ENCODE measurements at regions of chr6 and their contacts with region 1.

Region 1: DNA sequence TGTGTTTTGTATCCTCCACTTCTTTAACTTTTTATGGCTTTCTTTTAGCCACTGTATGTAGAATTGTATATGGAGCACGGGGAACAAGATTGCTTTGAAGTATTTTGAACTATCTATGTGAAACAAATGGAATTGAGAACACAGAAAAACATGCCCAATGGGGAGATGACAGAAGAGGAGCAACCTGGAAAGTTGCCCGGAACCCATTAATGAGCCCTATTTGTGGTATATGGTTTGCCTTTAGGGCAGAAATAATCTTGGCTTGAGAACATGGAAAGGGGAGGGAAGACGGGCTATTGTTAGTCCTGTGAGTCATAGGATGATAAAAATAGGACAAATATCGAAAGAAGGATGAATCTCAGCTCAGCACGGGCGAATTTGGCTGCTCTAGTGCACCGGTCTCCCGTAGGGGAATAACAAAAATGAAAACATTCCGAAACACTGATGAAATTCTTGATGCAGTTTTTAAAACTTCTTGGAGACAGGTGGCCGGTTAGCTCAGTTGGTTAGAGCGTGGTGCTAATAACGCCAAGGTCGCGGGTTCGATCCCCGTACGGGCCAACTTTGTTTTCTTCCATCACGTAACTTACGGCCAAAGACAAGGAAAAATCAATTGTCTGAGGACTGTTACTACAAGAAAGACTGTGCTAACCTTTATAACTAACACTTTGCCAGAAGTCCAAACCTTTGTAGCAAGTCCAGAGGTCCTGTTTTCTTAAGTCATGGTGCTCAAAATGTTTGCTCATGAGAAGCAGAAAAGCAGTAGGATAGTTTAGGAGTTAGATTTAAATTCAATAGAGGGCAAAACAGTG is 15.7 kb downstream of the HMGN4 start:
- DNase-seq: peak; percentile 91
- H3K4me3 Mint-ChIP-seq: no peak overlapping the region
- H3K27ac Mint-ChIP-seq: no peak overlapping the region
- H3K4me1 Mint-ChIP-seq: peaks cover 26% of the 10 kb centered on the region
- H3K27me3 Mint-ChIP-seq: no peaks in the 10 kb centered on the region

Region 2: DNA sequence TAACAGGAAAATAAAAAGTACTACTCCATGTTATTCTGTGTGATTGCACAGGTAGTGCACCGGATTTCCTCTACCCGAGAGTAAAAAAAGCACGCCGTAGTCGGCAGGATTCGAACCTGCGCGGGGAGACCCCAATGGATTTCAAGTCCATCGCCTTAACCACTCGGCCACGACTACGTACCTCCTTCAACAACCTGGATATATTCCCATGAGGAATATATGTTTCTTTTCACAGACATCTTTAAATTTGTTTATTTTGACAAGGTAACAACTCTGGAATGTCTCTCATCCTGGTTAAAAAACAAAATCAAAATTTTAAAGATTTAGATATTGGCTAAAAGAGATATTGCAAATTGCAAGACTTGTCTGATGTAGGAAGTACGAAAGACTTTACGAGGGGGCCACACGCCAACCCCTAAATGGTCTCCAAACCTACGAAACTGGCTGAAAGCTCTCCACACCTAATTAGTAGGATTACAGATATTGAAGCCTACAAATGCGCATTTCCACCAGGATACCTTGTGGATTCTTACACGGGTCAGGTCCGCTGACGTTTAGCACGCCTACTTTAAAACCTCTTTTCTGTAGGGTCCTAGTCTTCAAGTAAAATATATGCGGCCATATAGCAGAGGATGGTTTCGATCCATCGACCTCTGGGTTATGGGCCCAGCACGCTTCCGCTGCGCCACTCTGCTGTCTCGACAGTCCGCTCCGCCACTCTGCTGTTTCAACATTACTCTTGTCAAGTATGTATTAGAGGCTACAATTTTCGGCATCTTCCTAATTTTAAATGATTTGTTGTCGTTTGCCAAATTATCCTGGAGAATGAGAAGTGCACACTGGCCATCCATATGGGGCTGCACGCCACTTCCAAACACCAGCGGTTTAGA is 241.1 kb before region 1 on chr6:
- CTCF ChIA-PET with region 1: interaction called, 3 read pairs
- intact Hi-C with region 1: loop called (anchors 1 kb)
- DNase-seq: peak; percentile 95
- H3K4me3 Mint-ChIP-seq: peak overlapping the region; percentile 81
- H3K27ac Mint-ChIP-seq: peak overlapping the region; percentile 83
- H3K4me1 Mint-ChIP-seq: peaks cover 28% of the 10 kb centered on the region
- H3K27me3 Mint-ChIP-seq: no peaks in the 10 kb centered on the region

Region 3: DNA sequence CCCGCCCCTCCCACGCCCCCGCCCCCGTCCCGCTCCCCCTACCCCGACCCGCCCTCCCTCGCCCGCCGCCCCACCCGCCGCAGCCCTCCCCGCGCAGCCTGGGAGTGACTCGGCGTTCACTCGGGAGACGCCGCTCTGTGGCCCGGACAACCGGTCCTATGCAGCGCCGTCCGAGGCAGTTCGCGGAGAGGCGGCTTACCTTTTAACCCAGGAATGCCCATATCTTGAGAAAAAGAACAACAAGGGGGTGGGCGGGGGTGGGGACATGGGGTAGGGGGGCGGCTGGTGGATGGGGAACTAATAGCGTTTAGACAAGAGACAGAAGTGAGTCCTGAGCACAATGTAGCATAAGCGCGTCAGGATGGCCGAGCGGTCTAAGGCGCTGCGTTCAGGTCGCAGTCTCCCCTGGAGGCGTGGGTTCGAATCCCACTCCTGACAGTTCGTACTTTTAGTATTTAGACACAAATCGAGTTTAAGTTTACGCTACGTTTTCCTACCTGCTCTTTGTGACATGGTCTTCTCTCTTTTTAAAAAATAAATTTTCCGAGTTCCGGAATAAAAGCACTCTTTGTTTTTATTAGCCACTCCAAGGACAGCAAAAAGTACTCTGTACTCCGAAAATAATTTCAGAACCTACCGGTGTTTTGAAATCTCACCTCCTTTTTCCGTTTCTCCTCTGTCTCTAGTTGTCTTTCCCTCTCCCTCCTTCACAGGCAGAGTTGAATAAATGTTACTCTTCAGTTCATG is 32.8 kb before region 1 on chr6:
- CTCF ChIA-PET with region 1: no interaction called
- intact Hi-C with region 1: loop called (anchors 1 kb)
- DNase-seq: peak; percentile 90
- H3K4me3 Mint-ChIP-seq: peak overlapping the region; percentile 76
- H3K27ac Mint-ChIP-seq: peak overlapping the region; percentile 94
- H3K4me1 Mint-ChIP-seq: peaks cover 27% of the 10 kb centered on the region
- H3K27me3 Mint-ChIP-seq: peaks cover 2% of the 10 kb centered on the region